Naive thymus-derived CD4-positive, alpha-beta T cell (primary cell): ENCODE measurements at regions of chr6 and their contacts with region 1.

Region 1: GRCh38 chr6:25138237-25139125 is 140.7 kb upstream of the CARMIL1 start:
- DNase-seq: peak; percentile 14 to 67 (median 60)
- ATAC-seq: peak; percentile 94
- H3K4me3 ChIP-seq: peak overlapping the region; percentile 61
- H3K4me3 Mint-ChIP-seq: peak overlapping the region; percentile 84 to 98 (median 92)
- H3K27ac ChIP-seq: peak overlapping the region; percentile 76
- H3K27ac Mint-ChIP-seq: peak overlapping the region; percentile 87 to 97 (median 96)
- H3K4me1 ChIP-seq: peaks cover 12 to 16% of the 10 kb centered on the region in 2 donors
- H3K4me1 Mint-ChIP-seq: peaks cover 22 to 45% (median 27%) of the 10 kb centered on the region in 7 donors
- H3K27me3 ChIP-seq: no peaks in the 10 kb centered on the region
- H3K27me3 Mint-ChIP-seq: no peaks in the 10 kb centered on the region

Region 2: DNA sequence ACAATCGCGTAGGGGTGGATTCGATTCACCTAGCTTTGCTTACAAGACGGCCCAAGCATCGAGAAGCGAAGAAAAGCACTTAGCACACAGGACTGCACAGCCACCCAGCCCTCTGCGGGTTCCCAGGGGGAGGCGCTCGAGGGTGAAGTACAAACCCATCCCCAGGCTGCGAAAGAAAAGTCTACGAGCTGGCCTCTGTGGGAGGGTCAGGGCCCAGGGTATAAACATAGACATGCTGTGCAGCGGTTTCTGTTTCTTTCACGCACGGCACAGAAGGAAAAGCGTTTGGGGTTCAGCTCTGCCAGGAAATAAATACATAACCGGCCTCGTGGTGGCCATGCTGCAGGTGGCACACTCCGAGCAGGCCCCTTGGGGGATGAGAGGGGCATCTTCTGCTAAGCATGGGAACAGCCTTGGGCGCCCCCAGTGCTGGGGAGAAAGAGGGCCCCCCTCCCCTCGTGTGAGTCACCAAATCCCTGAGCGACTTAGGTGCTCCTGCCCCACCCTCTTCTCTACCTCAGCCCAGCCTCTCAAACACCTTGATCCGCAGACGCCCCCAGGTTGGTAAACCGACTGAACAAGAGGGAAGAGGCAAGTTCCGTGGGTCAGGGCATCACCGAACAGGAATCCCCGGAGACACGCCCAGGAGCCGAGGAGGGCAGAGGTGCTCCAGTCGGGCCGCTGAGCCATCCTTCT is 111.1 kb before region 1 on chr6:
- CTCF ChIA-PET with region 1: no interaction called
- POLR2A ChIA-PET with region 1: no interaction called
- intact Hi-C with region 1: loop called in 1 of 2 experiments (anchors 5 kb)
- DNase-seq: peak; percentile 47 to 79 (median 69)
- ATAC-seq: peak; percentile 97
- H3K4me3 ChIP-seq: peak overlapping the region; percentile 50
- H3K4me3 Mint-ChIP-seq: peak overlapping the region; percentile 63 to 84 (median 81)
- H3K27ac ChIP-seq: peak overlapping the region; percentile 50
- H3K27ac Mint-ChIP-seq: peak overlapping the region; percentile 60 to 87 (median 83)
- H3K4me1 ChIP-seq: peaks cover 22 to 30% of the 10 kb centered on the region in 2 donors
- H3K4me1 Mint-ChIP-seq: peaks cover 27 to 57% (median 48%) of the 10 kb centered on the region in 7 donors
- H3K27me3 ChIP-seq: no peaks in the 10 kb centered on the region
- H3K27me3 Mint-ChIP-seq: no peaks in the 10 kb centered on the region

Region 3: DNA sequence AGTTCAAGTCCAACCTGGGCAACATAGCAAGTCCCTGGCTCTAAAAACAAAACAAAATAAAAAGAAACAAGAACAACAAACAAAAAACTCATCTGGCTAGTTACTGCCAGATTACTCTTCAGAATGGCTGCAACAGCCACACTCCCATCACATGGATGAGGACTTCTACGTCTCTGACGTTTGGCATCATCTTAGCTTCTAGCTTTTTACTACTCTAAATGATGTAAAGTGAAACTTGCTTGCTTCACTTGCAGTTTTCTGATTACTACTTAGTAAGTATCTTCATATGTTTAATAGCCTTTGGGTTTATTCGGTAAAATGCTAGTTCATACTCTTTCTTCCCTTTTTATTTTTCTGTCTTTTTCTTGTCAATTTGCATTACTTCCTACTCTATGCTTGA is 20.4 kb before region 1 on chr6:
- CTCF ChIA-PET with region 1: no interaction called
- POLR2A ChIA-PET with region 1: interaction called, 6 read pairs
- intact Hi-C with region 1: loop called (anchors 2 kb)
- DNase-seq: no peak
- ATAC-seq: no peak
- H3K4me3 ChIP-seq: no peak overlapping the region
- H3K4me3 Mint-ChIP-seq: peak overlapping the region in 1 of 10 donors; percentile 23
- H3K27ac ChIP-seq: no peak overlapping the region
- H3K27ac Mint-ChIP-seq: peak overlapping the region in 2 of 9 donors; percentile 3 to 66
- H3K4me1 ChIP-seq: no peaks in the 10 kb centered on the region
- H3K4me1 Mint-ChIP-seq: peaks cover 11 to 55% (median 23%) of the 10 kb centered on the region in 7 donors
- H3K27me3 ChIP-seq: no peaks in the 10 kb centered on the region
- H3K27me3 Mint-ChIP-seq: no peaks in the 10 kb centered on the region

Region 4: GRCh38 chr6:25173951-25174474 is 35.5 kb after region 1 on chr6:
- CTCF ChIA-PET with region 1: no interaction called
- POLR2A ChIA-PET with region 1: interaction called, 4 read pairs
- intact Hi-C with region 1: loop called in 1 of 2 experiments (anchors 2 kb)
- DNase-seq: no peak
- ATAC-seq: peak; percentile 67
- H3K4me3 ChIP-seq: no peak overlapping the region
- H3K4me3 Mint-ChIP-seq: no peak overlapping the region
- H3K27ac ChIP-seq: no peak overlapping the region
- H3K27ac Mint-ChIP-seq: peak overlapping the region in 1 of 9 donors; percentile 18
- H3K4me1 ChIP-seq: no peaks in the 10 kb centered on the region
- H3K4me1 Mint-ChIP-seq: peaks cover 0 to 82% (median 4%) of the 10 kb centered on the region in 7 donors
- H3K27me3 ChIP-seq: no peaks in the 10 kb centered on the region
- H3K27me3 Mint-ChIP-seq: peaks cover 0 to 6% (median 0%) of the 10 kb centered on the region in 5 donors

Region 5: GRCh38 chr6:25369433-25370181 is 231.1 kb after region 1 on chr6:
- CTCF ChIA-PET with region 1: no interaction called
- POLR2A ChIA-PET with region 1: no interaction called
- intact Hi-C with region 1: loop called in 1 of 2 experiments (anchors 5 kb)
- DNase-seq: peak in 8 of 9 donors; percentile 34 to 67 (median 50)
- ATAC-seq: peak; percentile 52
- H3K4me3 ChIP-seq: peak overlapping the region; percentile 14
- H3K4me3 Mint-ChIP-seq: peak overlapping the region; percentile 79 to 97 (median 91)
- H3K27ac ChIP-seq: peak overlapping the region; percentile 80
- H3K27ac Mint-ChIP-seq: peak overlapping the region; percentile 82 to 100 (median 99)
- H3K4me1 ChIP-seq: peaks cover 18 to 46% of the 10 kb centered on the region in 2 donors
- H3K4me1 Mint-ChIP-seq: peaks cover 43 to 100% (median 96%) of the 10 kb centered on the region in 7 donors
- H3K27me3 ChIP-seq: no peaks in the 10 kb centered on the region
- H3K27me3 Mint-ChIP-seq: no peaks in the 10 kb centered on the region